ENCODE measurements at regions of chr4 and their contacts with region 1.

Region 1: DNA sequence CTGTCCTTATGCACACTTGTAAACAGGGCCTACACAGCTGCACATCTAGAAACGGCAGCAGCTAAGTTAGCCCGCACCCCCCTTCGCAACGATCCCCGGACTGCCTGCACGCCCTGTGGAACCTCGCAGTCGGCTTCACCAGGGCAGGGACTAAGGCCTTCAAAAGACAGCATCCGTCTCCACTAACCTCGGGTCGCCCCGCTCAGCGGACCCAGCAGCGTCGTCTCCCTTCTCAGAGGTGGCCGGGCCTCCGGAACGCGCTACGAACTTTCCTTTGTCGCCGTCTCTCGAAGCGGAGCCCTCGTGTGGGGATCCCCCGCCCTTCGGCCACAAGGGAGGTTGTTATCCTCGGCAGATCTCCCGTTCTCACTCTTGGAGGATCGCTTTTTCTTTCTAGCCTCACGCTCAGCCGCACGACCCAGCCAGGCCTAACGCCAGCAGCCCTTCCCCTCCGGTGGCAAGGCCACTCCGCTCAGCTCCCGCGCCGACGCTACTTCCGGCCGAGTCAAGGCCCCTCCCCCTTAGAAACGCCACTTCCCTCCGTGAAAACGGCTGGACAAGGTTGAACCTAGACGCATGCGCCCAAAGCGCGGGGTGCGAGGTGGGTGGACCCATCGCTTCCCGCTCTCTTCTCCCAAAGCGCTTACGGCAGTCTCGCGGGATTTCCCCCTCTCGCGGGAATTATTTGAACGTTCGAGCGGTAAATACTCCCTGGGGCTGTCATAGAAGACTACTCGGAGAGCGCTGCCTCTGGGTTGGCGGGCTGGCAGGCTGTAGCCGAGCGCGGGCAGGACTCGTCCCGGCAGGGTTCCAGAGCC is at the starts of genes DCAF16 and NCAPG:
- DNase-seq: peak; percentile 99 to 100 (median 100)
- ATAC-seq: peak; percentile 100
- H3K4me3 ChIP-seq: peak within 1 kb of the TSS; percentile 72 to 90 (median 77)
- H3K27ac ChIP-seq: peak within 1 kb of the TSS; percentile 86 to 98 (median 94)
- H3K4me1 ChIP-seq: peaks cover 5 to 61% (median 39%) of the 10 kb centered on the region in 12 donors
- H3K27me3 ChIP-seq: no peaks in the 10 kb centered on the region
- CTCF ChIP-seq: no peak
- POLR2A ChIP-seq: peak; percentile 75 to 94
- total RNA-seq, gene DCAF16: 14.2 to 23.5 (median 19.1) TPM
- total RNA-seq, gene NCAPG: 0.21 to 5.4 (median 0.86) TPM in 8 of 9 donors, not detected in the other

Region 2: DNA sequence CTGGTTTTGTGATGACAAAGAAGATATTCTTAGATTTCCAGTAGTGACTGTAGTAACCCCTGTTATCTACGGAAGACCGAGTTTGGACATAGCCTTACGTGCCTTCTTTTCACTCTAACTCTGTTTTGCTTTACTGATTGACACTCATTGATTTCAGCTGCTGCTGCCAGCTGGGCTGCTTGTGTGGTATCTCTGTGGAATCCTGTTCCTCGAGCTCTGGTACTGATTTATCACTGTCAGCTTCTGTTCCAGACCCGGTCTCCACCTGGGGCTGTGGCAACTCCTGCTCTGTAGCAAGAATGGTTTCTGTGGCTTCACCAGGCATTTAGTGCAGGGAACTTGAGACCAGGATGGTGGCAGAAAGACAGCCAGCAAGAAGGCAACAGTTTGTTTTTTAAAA is 258.0 kb before region 1 on chr4:
- intact Hi-C with region 1: loop called in 9 of 10 experiments (anchors 2 to 10 kb)
- DNase-seq: no peak
- ATAC-seq: no peak
- H3K4me3 ChIP-seq: no peak overlapping the region
- H3K27ac ChIP-seq: no peak overlapping the region
- H3K4me1 ChIP-seq: no peaks in the 10 kb centered on the region
- H3K27me3 ChIP-seq: peaks cover 0 to 10% (median 3%) of the 10 kb centered on the region in 9 donors
- CTCF ChIP-seq: no peak
- POLR2A ChIP-seq: no peak

Region 3: DNA sequence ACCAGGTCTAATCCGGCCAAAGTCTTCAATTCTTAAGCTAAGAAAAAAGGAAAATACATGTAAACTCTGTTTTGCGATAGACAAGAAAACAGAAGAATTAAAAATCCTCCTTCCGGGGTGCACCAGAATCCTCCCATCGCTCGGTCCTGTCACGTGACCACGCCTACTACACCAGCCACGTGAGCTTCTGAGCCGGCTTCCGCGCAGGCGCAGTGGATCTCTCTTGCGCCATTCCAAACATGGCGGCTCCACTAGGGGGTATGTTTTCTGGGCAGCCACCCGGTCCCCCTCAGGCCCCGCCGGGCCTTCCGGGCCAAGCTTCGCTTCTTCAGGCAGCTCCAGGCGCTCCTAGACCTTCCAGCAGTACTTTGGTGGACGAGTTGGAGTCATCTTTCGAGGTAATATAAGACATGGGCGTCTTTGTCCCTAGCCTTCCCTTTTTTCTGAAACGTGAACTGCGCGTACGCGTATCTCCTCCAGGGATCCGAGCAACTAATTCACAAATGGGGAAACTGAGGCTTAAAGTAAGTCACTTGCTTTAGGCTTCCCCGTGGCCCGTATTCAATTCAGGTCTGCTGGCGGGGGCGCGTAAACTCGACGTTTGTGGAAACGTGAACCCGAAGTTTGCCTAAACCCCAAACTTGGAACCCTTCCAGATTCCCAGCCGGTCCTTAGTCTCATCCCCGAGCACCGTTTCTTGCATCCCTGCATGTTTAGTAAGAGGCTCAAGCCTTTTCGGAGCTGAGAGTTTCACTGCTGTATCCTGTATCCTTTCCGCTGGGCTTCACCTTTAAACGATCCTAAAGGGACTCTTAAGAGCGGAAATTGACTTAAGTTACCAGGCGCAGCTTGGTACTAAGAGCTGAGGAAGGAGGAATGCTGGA is 195.8 kb before region 1 on chr4 and contains the start of gene MED28:
- intact Hi-C with region 1: loop called in 2 of 10 experiments (anchors 1 to 10 kb)
- DNase-seq: peak; percentile 95 to 98 (median 97)
- ATAC-seq: peak; percentile 95 to 98 (median 96)
- H3K4me3 ChIP-seq: peak within 1 kb of the TSS; percentile 73 to 100 (median 83)
- H3K27ac ChIP-seq: peak within 1 kb of the TSS; percentile 65 to 92 (median 82)
- H3K4me1 ChIP-seq: peaks cover 14 to 52% (median 37%) of the 10 kb centered on the region in 12 donors
- H3K27me3 ChIP-seq: no peaks in the 10 kb centered on the region
- CTCF ChIP-seq: peak in 6 of 12 donors; percentile 4 to 46 (median 30)
- POLR2A ChIP-seq: peak in 1 of 2 donors; percentile 77
- total RNA-seq, gene MED28: 4.4 to 22.1 (median 15.0) TPM

Region 4: GRCh38 chr4:18021722-18022571 is 211.5 kb after region 1 on chr4 and contains the start of gene LCORL:
- intact Hi-C with region 1: loop called in 9 of 10 experiments (anchors 1 to 10 kb)
- DNase-seq: peak; percentile 92 to 95 (median 94)
- ATAC-seq: peak; percentile 90 to 96 (median 93)
- H3K4me3 ChIP-seq: peak within 1 kb of the TSS; percentile 58 to 97 (median 90)
- H3K27ac ChIP-seq: peak within 1 kb of the TSS; percentile 85 to 97 (median 95)
- H3K4me1 ChIP-seq: peaks cover 0 to 31% (median 9%) of the 10 kb centered on the region in 12 donors
- H3K27me3 ChIP-seq: no peaks in the 10 kb centered on the region
- CTCF ChIP-seq: peak in 3 of 12 donors; percentile 3 to 22 (median 8)
- POLR2A ChIP-seq: no peak
- total RNA-seq, gene LCORL: 4.6 to 12.1 (median 6.0) TPM